Sciatic nerve (tissue), 2 donors: ENCODE measurements at regions of chr11 and their contacts with region 1.

Region 1: GRCh38 chr11:3222941-3223915 is 4.6 kb upstream of the MRGPRG start:
- DNase-seq: no peak
- ATAC-seq: no peak

Region 2: GRCh38 chr11:3109921-3110706 is 113.1 kb before region 1 on chr11:
- intact Hi-C with region 1: loop called (anchors 10 kb)
- DNase-seq: peak; percentile 63
- ATAC-seq: peak; percentile 49